ENCODE measurements at regions of chr5 and their contacts with region 1.

Region 1: GRCh38 chr5:18686253-18686652 is 1052.0 kb downstream of the TAF11L14 start:
- DNase-seq: no peak
- ATAC-seq: no peak
- H3K4me3 ChIP-seq: no peak overlapping the region
- H3K27ac ChIP-seq: no peak overlapping the region
- H3K4me1 ChIP-seq: no peaks in the 10 kb centered on the region
- H3K27me3 ChIP-seq: no peaks in the 10 kb centered on the region
- CTCF ChIP-seq: no peak
- EP300 ChIP-seq: no peak
- POLR2A ChIP-seq: no peak
- RAD21 ChIP-seq: no peak

Region 2: GRCh38 chr5:20213803-20214202 is 1527.5 kb after region 1 on chr5:
- CTCF ChIA-PET with region 1: no interaction called
- POLR2A ChIA-PET with region 1: no interaction called
- in situ Hi-C with region 1: loop called (anchors 5 kb)
- intact Hi-C with region 1: no loop called
- DNase-seq: no peak
- ATAC-seq: no peak
- H3K4me3 ChIP-seq: no peak overlapping the region
- H3K27ac ChIP-seq: no peak overlapping the region
- H3K4me1 ChIP-seq: no peaks in the 10 kb centered on the region
- H3K27me3 ChIP-seq: no peaks in the 10 kb centered on the region
- CTCF ChIP-seq: no peak
- EP300 ChIP-seq: no peak
- POLR2A ChIP-seq: no peak
- RAD21 ChIP-seq: no peak